CD4-positive, alpha-beta memory T cell (primary cell): ENCODE measurements at regions of chr19 and their contacts with region 1.

Region 1: GRCh38 chr19:46728693-46729676 is 12.1 kb upstream of the PRKD2 start:
- DNase-seq: peak; percentile 77 to 82 (median 78)
- H3K4me3 ChIP-seq: no peak overlapping the region
- H3K4me3 Mint-ChIP-seq: peak overlapping the region in 1 of 8 donors; percentile 1
- H3K27ac ChIP-seq: no peak overlapping the region
- H3K27ac Mint-ChIP-seq: peak overlapping the region in 4 of 7 donors; percentile 25 to 78 (median 56)
- H3K4me1 ChIP-seq: peaks cover 9% of the 10 kb centered on the region
- H3K4me1 Mint-ChIP-seq: peaks cover 8 to 10% (median 9%) of the 10 kb centered on the region in 4 donors
- H3K27me3 ChIP-seq: no peaks in the 10 kb centered on the region
- H3K27me3 Mint-ChIP-seq: no peaks in the 10 kb centered on the region

Region 2: GRCh38 chr19:46710687-46711086 is 18.3 kb before region 1 on chr19:
- CTCF ChIA-PET with region 1: interaction called, 173 read pairs
- POLR2A ChIA-PET with region 1: interaction called, 72 read pairs
- intact Hi-C with region 1: no loop called
- DNase-seq: no peak
- H3K4me3 ChIP-seq: no peak overlapping the region
- H3K4me3 Mint-ChIP-seq: no peak overlapping the region
- H3K27ac ChIP-seq: no peak overlapping the region
- H3K27ac Mint-ChIP-seq: peak overlapping the region in 3 of 7 donors; percentile 38 to 81 (median 50)
- H3K4me1 ChIP-seq: peaks cover 20% of the 10 kb centered on the region
- H3K4me1 Mint-ChIP-seq: peaks cover 9 to 39% (median 21%) of the 10 kb centered on the region in 4 donors
- H3K27me3 ChIP-seq: no peaks in the 10 kb centered on the region
- H3K27me3 Mint-ChIP-seq: no peaks in the 10 kb centered on the region

Region 3: DNA sequence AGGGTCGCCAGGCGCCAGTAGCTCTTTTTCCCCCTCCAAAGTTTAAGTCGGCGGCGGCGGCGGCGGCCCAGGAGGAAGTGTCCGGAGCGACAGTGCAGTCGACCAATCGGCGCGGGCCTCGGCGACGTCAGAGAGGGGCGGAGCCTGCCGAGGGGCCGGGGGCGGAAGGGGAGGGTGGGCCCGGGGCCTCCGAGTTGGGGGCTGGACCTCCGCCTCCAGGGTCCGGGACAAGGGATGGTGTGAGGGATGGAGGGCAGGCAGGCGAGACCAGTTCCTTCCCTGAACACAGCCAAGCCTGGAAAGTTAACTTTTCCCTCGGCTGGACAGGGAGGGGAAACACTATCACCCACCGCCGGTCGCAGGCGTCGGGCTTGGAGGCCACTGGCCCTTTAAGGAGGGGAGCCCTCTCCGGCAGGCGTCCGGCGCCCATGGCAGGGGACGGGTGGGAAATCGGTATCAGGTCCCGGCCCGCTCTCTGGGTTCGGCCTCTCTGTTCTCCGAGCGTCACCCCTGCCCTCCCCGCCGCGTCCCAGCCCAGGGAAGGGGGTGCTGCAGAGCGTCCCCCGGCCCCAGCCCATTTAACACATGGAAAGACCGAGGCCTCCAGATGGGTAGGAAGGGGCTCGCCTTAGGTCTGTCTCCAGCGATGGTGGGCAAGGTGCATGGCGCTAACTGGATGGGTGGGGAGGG is 11.8 kb before region 1 on chr19 and contains the start of gene PRKD2:
- CTCF ChIA-PET with region 1: interaction called, 20 read pairs
- POLR2A ChIA-PET with region 1: interaction called, 72 read pairs
- intact Hi-C with region 1: loop called (anchors 1 kb)
- DNase-seq: peak; percentile 76 to 85 (median 79)
- H3K4me3 ChIP-seq: peak within 1 kb of the TSS; percentile 82 to 94
- H3K4me3 Mint-ChIP-seq: peak within 1 kb of the TSS; percentile 93 to 98 (median 94)
- H3K27ac ChIP-seq: peak within 1 kb of the TSS; percentile 95
- H3K27ac Mint-ChIP-seq: peak within 1 kb of the TSS; percentile 97 to 99 (median 98)
- H3K4me1 ChIP-seq: peaks cover 44% of the 10 kb centered on the region
- H3K4me1 Mint-ChIP-seq: peaks cover 23 to 64% (median 37%) of the 10 kb centered on the region in 4 donors
- H3K27me3 ChIP-seq: no peaks in the 10 kb centered on the region
- H3K27me3 Mint-ChIP-seq: no peaks in the 10 kb centered on the region
- total RNA-seq, gene PRKD2: 115 to 122 TPM

Region 4: DNA sequence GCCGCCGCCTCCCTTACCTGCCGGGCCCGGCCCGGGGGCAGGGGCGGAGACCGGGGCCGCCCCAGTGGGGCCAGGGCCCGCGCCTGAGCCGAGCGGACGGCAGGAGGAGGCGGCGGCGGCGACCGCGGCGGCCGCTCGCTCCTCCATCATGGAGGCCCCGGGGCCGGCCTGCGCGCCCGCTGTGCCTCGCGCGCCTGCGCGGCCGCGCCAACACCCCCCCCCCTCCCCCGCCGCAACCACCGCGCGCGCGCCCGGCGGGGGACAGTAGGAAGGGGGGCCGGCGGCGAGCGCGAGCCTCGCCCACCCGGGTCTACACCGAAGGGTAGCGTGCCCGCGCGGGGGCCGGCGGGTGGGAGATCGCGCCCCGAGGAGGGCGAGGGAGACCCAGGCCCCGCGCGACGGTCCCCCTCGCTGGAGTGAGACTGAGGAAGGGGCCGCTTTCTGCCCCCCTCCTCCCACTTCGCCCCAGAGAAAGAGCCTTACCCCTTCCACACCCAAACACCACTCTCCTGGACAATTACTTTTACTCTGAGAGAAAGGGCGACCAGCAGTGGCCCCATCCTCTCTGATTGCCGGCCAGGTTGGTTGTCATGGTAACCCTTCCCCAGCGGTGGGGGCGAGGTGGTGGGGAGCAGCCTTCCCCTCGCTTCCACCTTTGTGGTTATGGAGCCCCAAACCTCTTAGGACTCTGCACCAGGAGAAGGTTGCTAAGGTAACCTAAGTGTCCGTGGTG is 17.5 kb after region 1 on chr19 and contains the start of gene STRN4:
- CTCF ChIA-PET with region 1: interaction called, 52 read pairs
- POLR2A ChIA-PET with region 1: interaction called, 7 read pairs
- intact Hi-C with region 1: no loop called
- DNase-seq: peak; percentile 49 to 74 (median 52)
- H3K4me3 ChIP-seq: peak within 1 kb of the TSS; percentile 54 to 80
- H3K4me3 Mint-ChIP-seq: peak within 1 kb of the TSS; percentile 88 to 94 (median 90)
- H3K27ac ChIP-seq: peak within 1 kb of the TSS; percentile 76
- H3K27ac Mint-ChIP-seq: peak within 1 kb of the TSS; percentile 92 to 96 (median 95)
- H3K4me1 ChIP-seq: peaks cover 35% of the 10 kb centered on the region
- H3K4me1 Mint-ChIP-seq: peaks cover 35 to 64% (median 49%) of the 10 kb centered on the region in 4 donors
- H3K27me3 ChIP-seq: no peaks in the 10 kb centered on the region
- H3K27me3 Mint-ChIP-seq: no peaks in the 10 kb centered on the region
- total RNA-seq, gene STRN4: 81.2 to 88.8 TPM

Region 5: GRCh38 chr19:47112997-47113849 is 384.2 kb after region 1 on chr19 and contains the start of gene ZC3H4:
- CTCF ChIA-PET with region 1: no interaction called
- POLR2A ChIA-PET with region 1: no interaction called
- intact Hi-C with region 1: no loop called
- DNase-seq: peak; percentile 100
- H3K4me3 ChIP-seq: peak within 1 kb of the TSS; percentile 90 to 95
- H3K4me3 Mint-ChIP-seq: peak within 1 kb of the TSS; percentile 97 to 100 (median 98)
- H3K27ac ChIP-seq: peak within 1 kb of the TSS; percentile 98
- H3K27ac Mint-ChIP-seq: peak within 1 kb of the TSS; percentile 99 to 100 (median 100)
- H3K4me1 ChIP-seq: peaks cover 28% of the 10 kb centered on the region
- H3K4me1 Mint-ChIP-seq: peaks cover 17 to 46% (median 28%) of the 10 kb centered on the region in 4 donors
- H3K27me3 ChIP-seq: no peaks in the 10 kb centered on the region
- H3K27me3 Mint-ChIP-seq: no peaks in the 10 kb centered on the region
- total RNA-seq, gene ZC3H4: 74.8 to 75.7 TPM